ENCODE measurements at regions of chr11 and their contacts with region 1.

Region 1: DNA sequence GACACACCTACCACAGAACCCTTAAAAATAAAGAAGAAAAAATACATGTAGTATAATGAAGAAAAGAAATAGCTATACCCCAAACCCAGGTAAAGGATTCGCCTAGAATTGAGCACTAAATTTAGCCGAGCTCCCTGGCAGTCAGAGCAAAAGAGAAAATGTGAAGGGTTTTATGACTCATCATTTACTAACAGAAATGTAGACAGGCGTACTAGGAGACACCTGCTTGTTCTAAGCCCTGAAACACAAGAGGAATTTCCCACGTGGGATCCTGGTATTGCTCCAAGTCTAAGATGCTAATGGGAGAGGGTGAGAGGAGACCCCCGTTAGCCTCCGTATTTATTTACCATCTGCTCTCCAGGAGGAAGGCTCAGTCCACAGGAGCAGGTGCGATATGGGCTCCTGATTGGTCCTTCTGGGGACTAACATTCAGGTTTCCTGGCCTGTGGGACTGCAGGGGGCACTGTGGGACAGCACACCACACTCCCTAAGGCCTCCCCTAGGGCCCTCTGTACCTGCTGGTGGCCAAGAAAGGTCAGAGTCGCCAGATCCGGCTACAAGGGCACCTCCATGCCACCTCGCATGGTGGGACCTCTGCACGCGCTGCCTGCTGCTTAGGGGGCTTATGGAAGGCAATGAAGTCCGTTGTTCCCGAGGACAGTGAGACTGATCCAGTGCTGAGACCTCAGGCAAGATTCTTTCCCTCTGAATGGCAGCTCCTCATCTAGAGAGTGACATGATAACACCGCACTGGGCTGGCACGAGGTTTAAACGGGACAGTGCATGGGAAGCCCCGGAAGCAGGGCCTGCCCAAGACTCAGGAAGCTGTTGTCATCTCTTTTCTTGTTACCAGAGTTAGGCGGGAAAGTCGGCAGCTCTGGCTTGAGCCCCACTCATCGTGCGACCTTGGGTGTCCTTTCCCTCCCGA is 25.8 kb downstream of the KCNC1 start:
- DNase-seq: peak; percentile 70 to 87 (median 72)
- ATAC-seq: peak; percentile 98
- H3K4me3 ChIP-seq: no peak overlapping the region
- H3K27ac ChIP-seq: no peak overlapping the region
- H3K4me1 ChIP-seq: no peaks in the 10 kb centered on the region
- H3K27me3 ChIP-seq: peaks cover 0 to 5% of the 10 kb centered on the region in 2 experiments; a peak in 3 of 5 replicates
- CTCF ChIP-seq: peak; percentile 85 to 89 (median 88)
- EP300 ChIP-seq: no peak
- POLR2A ChIP-seq: no peak
- RAD21 ChIP-seq: peak; percentile 87 to 91

Region 2: DNA sequence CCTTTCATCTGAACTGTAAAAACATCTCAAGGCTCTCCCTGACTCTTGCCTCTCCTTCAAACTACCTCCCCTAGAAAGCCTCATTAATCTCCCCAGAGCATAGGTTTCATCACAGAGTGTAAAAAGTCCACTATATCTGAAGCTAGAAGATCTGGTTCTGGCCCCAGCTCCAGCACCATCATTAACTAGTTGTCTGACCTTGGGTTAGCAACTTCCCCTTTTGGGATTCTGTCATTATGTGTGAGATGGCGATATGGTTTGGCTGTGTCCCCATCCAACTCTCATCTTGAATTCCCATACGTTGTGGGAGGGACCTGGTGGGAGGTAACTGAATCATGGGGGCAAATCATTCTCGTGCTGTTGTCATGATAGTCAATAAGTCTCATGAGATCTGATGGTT is 71.5 kb after region 1 on chr11:
- CTCF ChIA-PET with region 1: no interaction called
- POLR2A ChIA-PET with region 1: no interaction called
- in situ Hi-C with region 1: no loop called
- intact Hi-C with region 1: loop called (anchors 5 kb)
- DNase-seq: peak in 1 of 4 experiments; percentile 18
- ATAC-seq: no peak
- H3K4me3 ChIP-seq: no peak overlapping the region
- H3K27ac ChIP-seq: no peak overlapping the region
- H3K4me1 ChIP-seq: 0 out of 5 replicates have a peak, but pooled peaks cover 0 to 4% of the 10 kb centered on the region in 2 experiments
- H3K27me3 ChIP-seq: peaks cover 3 to 5% of the 10 kb centered on the region in 2 experiments; a peak in 1 of 5 replicates
- CTCF ChIP-seq: no peak
- EP300 ChIP-seq: no peak
- POLR2A ChIP-seq: no peak
- RAD21 ChIP-seq: no peak

Region 3: GRCh38 chr11:17906436-17906835 is 146.1 kb after region 1 on chr11:
- CTCF ChIA-PET with region 1: no interaction called
- POLR2A ChIA-PET with region 1: no interaction called
- in situ Hi-C with region 1: no loop called
- intact Hi-C with region 1: loop called (anchors 1 kb)
- DNase-seq: peak; percentile 16 to 40 (median 25)
- ATAC-seq: peak; percentile 87
- H3K4me3 ChIP-seq: no peak overlapping the region
- H3K27ac ChIP-seq: no peak overlapping the region
- H3K4me1 ChIP-seq: no peaks in the 10 kb centered on the region
- H3K27me3 ChIP-seq: no peaks in the 10 kb centered on the region
- CTCF ChIP-seq: peak; percentile 22 to 46 (median 45); a peak in 3 of 6 replicates
- EP300 ChIP-seq: no peak
- POLR2A ChIP-seq: no peak
- RAD21 ChIP-seq: peak in 1 of 2 experiments; percentile 45; a peak in 2 of 4 replicates

Region 4: DNA sequence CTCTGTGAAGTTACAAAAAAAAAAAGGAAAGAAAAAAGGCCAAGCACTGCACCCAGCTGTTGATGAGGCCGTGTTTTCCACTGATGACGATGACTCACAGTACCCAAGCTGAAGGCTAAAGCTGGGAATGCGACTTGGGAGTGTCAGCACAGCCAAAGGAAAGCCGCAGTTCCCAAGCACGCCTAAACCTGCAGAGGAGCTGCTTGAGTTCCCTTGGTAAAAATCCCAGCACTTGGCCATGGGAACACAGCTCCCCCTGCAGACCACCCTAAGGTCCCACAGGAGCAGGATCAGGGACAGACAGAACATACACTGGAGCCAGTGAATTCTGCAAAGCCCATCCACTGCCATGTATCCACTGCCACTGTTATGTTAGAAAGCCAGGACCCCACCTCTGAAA is 212.6 kb after region 1 on chr11:
- CTCF ChIA-PET with region 1: interaction called, 42 read pairs
- POLR2A ChIA-PET with region 1: interaction called, 3 read pairs
- in situ Hi-C with region 1: loop called (anchors 5 kb)
- intact Hi-C with region 1: loop called (anchors 1 kb)
- DNase-seq: peak; percentile 50 to 58 (median 51)
- ATAC-seq: peak; percentile 87
- H3K4me3 ChIP-seq: no peak overlapping the region
- H3K27ac ChIP-seq: no peak overlapping the region
- H3K4me1 ChIP-seq: no peaks in the 10 kb centered on the region
- H3K27me3 ChIP-seq: no peaks in the 10 kb centered on the region
- CTCF ChIP-seq: peak; percentile 63 to 73 (median 71)
- EP300 ChIP-seq: no peak
- POLR2A ChIP-seq: no peak
- RAD21 ChIP-seq: peak in 1 of 2 experiments; percentile 62; a peak in 2 of 4 replicates

Region 5: DNA sequence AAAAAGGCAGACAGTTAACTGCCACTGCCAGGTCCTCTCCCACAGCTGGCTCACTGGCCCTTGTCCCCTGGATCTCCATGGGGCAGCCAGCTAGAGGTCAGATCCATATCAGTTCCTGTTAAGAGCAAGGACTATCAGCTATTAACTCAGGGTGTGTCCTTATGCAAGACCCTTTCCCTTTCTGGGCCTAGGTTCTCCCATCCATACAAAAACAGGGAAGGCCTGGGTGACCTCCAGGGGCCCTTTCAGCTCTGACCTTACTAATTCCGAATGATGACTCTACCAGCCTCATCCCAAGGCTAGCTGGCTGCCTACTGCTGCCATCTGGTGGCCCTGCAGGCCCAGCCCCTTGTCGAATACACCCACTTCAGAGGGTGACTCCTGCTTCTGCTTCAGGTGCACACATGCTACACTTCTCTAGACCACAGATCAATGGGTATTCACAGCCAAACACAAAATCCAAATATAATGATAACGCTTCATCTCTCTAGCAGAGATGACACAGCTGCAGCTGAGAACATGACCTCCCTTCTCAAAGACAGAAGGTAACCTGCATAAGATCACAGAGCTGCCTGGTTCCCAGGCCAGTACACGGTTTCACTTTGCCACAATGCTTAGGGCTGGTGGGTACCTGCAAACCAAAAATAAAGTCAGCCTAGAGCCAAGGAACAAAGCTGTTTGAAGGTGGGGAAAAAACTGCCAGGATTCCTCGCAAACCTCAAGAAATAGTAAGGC is 218.4 kb after region 1 on chr11:
- CTCF ChIA-PET with region 1: interaction called, 42 read pairs
- POLR2A ChIA-PET with region 1: interaction called, 6 read pairs
- in situ Hi-C with region 1: loop called (anchors 5 kb)
- intact Hi-C with region 1: loop called (anchors 1 kb)
- DNase-seq: peak; percentile 49 to 63 (median 52)
- ATAC-seq: peak; percentile 90
- H3K4me3 ChIP-seq: no peak overlapping the region
- H3K27ac ChIP-seq: no peak overlapping the region
- H3K4me1 ChIP-seq: no peaks in the 10 kb centered on the region
- H3K27me3 ChIP-seq: no peaks in the 10 kb centered on the region
- CTCF ChIP-seq: peak; percentile 70 to 78 (median 70)
- EP300 ChIP-seq: no peak
- POLR2A ChIP-seq: no peak
- RAD21 ChIP-seq: peak; percentile 59 to 67; a peak in 3 of 4 replicates